ENCODE measurements at regions of chr3 and their contacts with region 1.

Region 1: GRCh38 chr3:45760878-45761711 is 35.2 kb downstream of the SLC6A20 start:
- DNase-seq: peak in 4 of 5 donors; percentile 38 to 52 (median 45)
- ATAC-seq: peak; percentile 74 to 87 (median 82)
- H3K4me3 ChIP-seq: no peak overlapping the region
- H3K27ac ChIP-seq: no peak overlapping the region
- H3K4me1 ChIP-seq: no peaks in the 10 kb centered on the region
- H3K27me3 ChIP-seq: peaks cover 0 to 27% (median 0%) of the 10 kb centered on the region in 9 donors
- CTCF ChIP-seq: peak; percentile 48 to 74 (median 61)
- POLR2A ChIP-seq: no peak

Region 2: GRCh38 chr3:45612918-45613602 is 148.0 kb before region 1 on chr3:
- intact Hi-C with region 1: no loop called
- DNase-seq: no peak
- ATAC-seq: no peak
- H3K4me3 ChIP-seq: no peak overlapping the region
- H3K27ac ChIP-seq: peak overlapping the region in 1 of 12 donors; percentile 34
- H3K4me1 ChIP-seq: peaks cover 0 to 88% (median 61%) of the 10 kb centered on the region in 12 donors
- H3K27me3 ChIP-seq: no peaks in the 10 kb centered on the region
- CTCF ChIP-seq: no peak
- POLR2A ChIP-seq: no peak

Region 3: DNA sequence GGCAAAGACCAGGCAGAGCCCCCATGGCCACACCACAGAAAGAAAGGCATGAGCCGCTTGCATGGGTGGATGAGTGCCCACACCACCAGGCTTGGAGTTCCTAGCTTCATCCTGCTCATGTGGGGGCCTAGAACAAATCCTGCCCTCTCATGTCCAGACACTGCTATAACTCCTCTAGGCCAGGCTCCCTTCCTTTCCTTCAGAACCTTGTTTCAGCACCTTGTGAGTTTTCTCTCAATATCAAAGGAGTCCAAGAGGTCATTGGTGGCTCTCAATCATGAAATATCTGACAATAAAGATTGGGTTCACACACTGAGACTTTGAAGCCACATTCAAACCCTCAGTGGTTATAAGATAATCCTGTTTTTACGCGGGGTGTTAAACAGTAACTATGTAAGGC is 22.6 kb after region 1 on chr3:
- intact Hi-C with region 1: no loop called
- DNase-seq: no peak
- ATAC-seq: no peak
- H3K4me3 ChIP-seq: no peak overlapping the region
- H3K27ac ChIP-seq: no peak overlapping the region
- H3K4me1 ChIP-seq: no peaks in the 10 kb centered on the region
- H3K27me3 ChIP-seq: no peaks in the 10 kb centered on the region
- CTCF ChIP-seq: no peak
- POLR2A ChIP-seq: no peak

Region 4: DNA sequence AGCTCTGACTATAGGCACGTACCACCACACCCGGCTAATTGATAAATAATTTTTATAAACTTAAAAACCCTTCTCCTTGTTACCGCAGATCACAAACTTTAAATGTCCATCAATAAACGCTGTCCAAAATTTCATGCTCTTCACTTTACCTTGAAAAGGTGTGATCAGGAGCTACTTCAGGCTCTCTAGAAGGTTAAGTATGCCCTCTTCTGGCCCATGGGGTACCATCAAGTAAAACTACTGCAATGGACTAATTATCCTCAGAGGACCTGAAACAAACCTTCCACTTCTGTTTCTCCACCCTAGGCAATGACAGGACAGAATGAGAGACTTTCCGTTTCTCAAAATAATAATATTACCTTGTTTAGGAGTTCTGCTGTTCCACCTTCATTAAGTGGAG is 71.6 kb after region 1 on chr3:
- intact Hi-C with region 1: loop called (anchors 2 to 5 kb)
- DNase-seq: no peak
- ATAC-seq: no peak
- H3K4me3 ChIP-seq: no peak overlapping the region
- H3K27ac ChIP-seq: no peak overlapping the region
- H3K4me1 ChIP-seq: no peaks in the 10 kb centered on the region
- H3K27me3 ChIP-seq: no peaks in the 10 kb centered on the region
- CTCF ChIP-seq: peak in 9 of 12 donors; percentile 7 to 48 (median 34)
- POLR2A ChIP-seq: no peak

Region 5: DNA sequence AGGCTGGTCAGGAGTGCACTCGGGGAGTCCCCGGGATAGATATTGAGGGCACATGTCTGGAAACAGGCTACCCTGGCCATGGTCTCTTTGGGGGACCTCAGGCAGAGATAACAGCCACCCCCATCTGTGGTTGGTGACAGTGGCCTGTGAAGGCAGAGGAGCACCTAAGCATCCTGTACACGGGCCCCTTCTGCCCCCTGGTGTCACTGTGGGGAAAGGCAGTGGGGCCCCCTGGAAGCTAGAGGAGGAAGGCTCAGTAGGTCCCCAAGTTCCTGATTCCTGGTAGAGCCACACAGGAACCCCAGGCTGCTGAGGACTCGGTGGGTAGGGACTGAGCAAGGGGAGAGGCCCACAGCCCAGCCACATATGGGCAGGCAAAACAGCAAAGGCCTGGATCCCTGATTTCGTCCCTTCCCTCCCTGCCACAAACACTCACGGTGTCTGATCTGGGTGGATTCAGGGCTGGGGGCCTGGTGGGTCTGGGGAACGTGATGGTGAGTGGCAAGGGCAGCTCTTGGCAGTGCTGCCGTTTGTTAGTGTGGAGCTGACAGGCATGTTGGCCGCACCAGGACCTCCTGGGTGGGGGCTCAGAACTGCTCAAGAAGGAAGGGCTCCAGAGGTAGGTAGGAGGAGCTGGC is 168.1 kb after region 1 on chr3:
- intact Hi-C with region 1: loop called in 9 of 10 experiments (anchors 2 to 10 kb)
- DNase-seq: peak in 1 of 5 donors; percentile 61
- ATAC-seq: peak in 3 of 4 donors; percentile 59 to 66 (median 66)
- H3K4me3 ChIP-seq: no peak overlapping the region
- H3K27ac ChIP-seq: no peak overlapping the region
- H3K4me1 ChIP-seq: peaks cover 0 to 15% (median 3%) of the 10 kb centered on the region in 12 donors
- H3K27me3 ChIP-seq: no peaks in the 10 kb centered on the region
- CTCF ChIP-seq: peak; percentile 35 to 65 (median 48)
- POLR2A ChIP-seq: no peak

Region 6: GRCh38 chr3:46078712-46079400 is 317.8 kb after region 1 on chr3:
- intact Hi-C with region 1: loop called (anchors 1 to 10 kb)
- DNase-seq: peak; percentile 61 to 91 (median 85)
- ATAC-seq: peak; percentile 96 to 98 (median 98)
- H3K4me3 ChIP-seq: peak overlapping the region in 5 of 12 donors; percentile 11 to 29 (median 21)
- H3K27ac ChIP-seq: no peak overlapping the region
- H3K4me1 ChIP-seq: peaks cover 0 to 4% (median 0%) of the 10 kb centered on the region in 12 donors
- H3K27me3 ChIP-seq: no peaks in the 10 kb centered on the region
- CTCF ChIP-seq: peak; percentile 89 to 100 (median 96)
- POLR2A ChIP-seq: no peak

Region 7: GRCh38 chr3:46348823-46349484 is 587.9 kb after region 1 on chr3:
- intact Hi-C with region 1: no loop called
- DNase-seq: no peak
- ATAC-seq: no peak
- H3K4me3 ChIP-seq: no peak overlapping the region
- H3K27ac ChIP-seq: peak overlapping the region in 1 of 12 donors; percentile 34
- H3K4me1 ChIP-seq: peaks cover 0 to 44% (median 0%) of the 10 kb centered on the region in 12 donors
- H3K27me3 ChIP-seq: peaks cover 0 to 30% (median 0%) of the 10 kb centered on the region in 9 donors
- CTCF ChIP-seq: no peak
- POLR2A ChIP-seq: no peak